ENCODE measurements at regions of chr3 and their contacts with region 1.

Region 1: DNA sequence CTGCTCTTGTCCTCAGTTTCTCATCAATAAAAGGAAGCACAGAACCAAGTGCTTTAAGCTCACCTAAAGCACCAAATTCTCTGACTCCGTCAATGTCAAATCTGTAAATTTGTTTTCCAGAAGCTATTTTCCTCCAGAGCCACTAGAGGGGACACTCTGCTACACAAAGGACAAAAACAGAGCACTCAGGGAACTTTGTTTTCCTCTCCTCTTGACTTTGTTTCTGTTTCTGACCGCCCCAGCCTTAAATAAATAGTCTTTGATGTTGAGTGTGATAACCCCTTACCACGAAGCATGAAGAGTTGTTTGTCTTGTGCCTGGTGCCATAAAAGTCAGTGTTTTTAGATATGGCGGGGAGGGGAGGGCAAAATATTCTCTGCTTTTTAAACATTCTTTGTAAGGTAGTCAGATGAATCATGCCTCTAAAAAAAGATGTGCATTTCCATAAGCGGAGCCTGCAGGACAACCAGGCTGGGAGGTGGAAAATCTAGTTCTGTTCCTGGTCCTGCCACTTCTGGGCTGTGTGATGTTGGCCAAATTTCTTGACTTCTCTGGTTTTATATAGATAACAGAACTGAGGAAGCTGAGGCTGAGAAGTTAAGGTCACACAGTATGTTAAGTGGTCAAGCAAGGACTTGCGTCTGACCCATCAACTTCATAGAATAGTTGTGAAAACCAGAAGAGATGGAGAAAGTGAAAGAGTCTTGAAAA is 7.3 kb upstream of the ZBTB38 start:
- DNase-seq: peak; percentile 72
- CTCF ChIP-seq: peak; percentile 70

Region 2: DNA sequence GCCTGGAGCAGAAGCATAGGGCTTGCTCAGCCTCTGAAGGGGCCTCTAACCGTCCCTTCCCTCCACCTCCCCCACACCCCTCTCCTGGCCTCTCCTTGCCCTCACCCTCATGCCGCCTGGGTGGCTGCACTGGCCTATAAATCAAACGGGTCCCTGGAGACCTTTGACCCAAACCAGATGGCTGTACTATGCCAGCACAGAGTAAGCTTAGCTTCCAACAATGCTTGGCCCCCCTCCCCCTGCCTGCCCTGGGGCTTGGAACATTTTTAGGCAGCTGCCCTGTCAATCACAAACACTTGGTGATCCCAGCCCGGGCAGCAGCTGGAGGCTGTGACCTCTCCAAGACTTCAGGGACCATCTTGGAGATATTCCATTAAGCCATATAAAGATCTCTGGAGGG is 276.8 kb before region 1 on chr3:
- CTCF ChIA-PET with region 1: no interaction called
- POLR2A ChIA-PET with region 1: no interaction called
- DNase-seq: no peak
- CTCF ChIP-seq: no peak

Region 3: GRCh38 chr3:141192345-141192744 is 168.7 kb before region 1 on chr3:
- CTCF ChIA-PET with region 1: no interaction called
- POLR2A ChIA-PET with region 1: no interaction called
- DNase-seq: peak; percentile 84
- CTCF ChIP-seq: peak; percentile 98

Region 4: DNA sequence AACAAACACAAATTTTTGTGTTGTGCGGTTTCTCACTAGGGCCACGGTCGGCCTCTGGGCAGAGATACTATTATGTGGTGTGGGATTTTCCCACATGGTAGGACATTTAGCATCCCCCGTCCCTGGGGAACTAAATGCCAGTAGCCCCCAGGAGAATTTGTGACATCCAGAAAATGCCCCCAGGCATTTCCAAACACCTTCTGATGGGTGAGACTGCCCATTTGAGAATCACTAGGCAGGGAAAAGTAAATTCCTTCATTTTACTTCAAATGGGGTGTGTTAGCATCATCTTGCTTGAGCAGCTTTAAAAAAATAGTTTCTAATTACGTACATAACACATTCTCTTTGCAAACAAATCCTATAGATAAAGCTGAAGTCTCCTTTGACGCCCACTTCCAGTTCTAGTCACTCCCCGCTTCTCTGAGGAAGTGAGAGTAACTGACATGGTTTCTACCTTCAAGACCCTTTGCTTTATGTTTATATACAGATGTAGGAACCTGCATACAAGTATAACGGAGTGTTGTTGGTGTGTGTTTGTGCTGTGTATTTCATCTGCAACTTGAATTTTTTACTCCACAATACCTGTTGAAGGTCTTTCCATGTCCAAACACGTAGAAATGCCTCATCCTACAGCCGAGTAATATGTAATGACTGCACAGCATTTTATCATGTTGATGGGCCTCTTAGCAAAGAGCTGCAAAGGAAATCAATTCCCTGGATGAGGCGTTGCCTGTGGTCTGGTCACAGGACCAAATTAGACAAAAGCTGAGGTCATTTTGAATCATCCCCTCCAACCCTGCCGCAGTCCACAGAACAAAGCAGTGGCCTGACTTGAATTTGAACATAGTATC is 24.1 kb before region 1 on chr3:
- CTCF ChIA-PET with region 1: interaction called, 16 read pairs
- POLR2A ChIA-PET with region 1: no interaction called
- DNase-seq: peak; percentile 78
- CTCF ChIP-seq: no peak

Region 5: GRCh38 chr3:141379250-141379966 is 18.4 kb after region 1 on chr3:
- CTCF ChIA-PET with region 1: interaction called, 143 read pairs
- POLR2A ChIA-PET with region 1: no interaction called
- DNase-seq: peak; percentile 35
- CTCF ChIP-seq: no peak

Region 6: GRCh38 chr3:141402476-141403171 is 41.6 kb after region 1 on chr3:
- CTCF ChIA-PET with region 1: interaction called, 17 read pairs
- POLR2A ChIA-PET with region 1: no interaction called
- DNase-seq: peak; percentile 43
- CTCF ChIP-seq: no peak

Region 7: GRCh38 chr3:141426404-141427034 is 65.5 kb after region 1 on chr3:
- CTCF ChIA-PET with region 1: interaction called, 42 read pairs
- POLR2A ChIA-PET with region 1: no interaction called
- DNase-seq: no peak
- CTCF ChIP-seq: no peak

Region 8: GRCh38 chr3:141485641-141486495 is 124.8 kb after region 1 on chr3:
- CTCF ChIA-PET with region 1: no interaction called
- POLR2A ChIA-PET with region 1: no interaction called
- DNase-seq: no peak
- CTCF ChIP-seq: no peak

Region 9: DNA sequence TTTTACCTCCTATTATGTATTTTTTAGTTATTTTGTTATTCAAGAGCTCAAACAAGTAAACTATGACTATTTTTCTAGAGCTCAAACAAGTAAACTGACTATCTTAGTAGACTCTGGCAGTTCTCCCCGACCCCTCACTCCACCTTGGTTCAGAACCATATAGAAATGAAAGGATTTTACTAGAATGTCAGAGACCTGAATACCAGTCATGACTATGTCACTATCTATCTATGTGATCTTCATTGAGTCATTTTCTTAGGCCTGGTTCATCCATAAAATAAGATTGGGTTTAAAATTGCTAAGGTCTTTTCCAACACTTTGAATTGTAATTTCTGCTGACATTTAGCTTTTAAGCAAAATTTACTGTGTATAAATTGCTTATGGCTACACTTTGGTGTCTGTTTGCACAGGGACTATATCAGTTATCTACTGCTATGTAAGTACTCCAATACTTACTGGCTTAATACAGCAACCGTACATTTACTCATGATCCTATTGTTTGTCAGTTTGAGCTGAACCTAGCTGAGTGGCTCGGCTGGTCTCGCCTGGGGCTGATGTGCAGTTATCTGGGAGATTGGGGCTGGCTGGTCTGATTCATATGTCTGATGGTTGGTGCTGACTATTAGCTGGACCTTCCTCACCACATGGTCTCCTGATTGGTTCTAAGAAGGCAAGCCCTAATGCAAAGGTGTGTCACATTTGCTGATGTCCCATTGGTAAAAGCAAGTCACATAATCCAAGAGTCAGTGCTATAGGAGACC is 162.8 kb after region 1 on chr3:
- CTCF ChIA-PET with region 1: no interaction called
- POLR2A ChIA-PET with region 1: no interaction called
- DNase-seq: no peak
- CTCF ChIP-seq: no peak

Measured in GM10248 (cell line).